Activated T-helper 1 cell treated with anti-CD3 and anti-CD28 coated beads, Interleukin-12 subunit alpha, Interleukin-12 subunit beta, Interleukin-2, Interleukin-4 antibody, amounts not matched to agents 30 ng/mL and 10 ng/mL and 1 ng/mL, durations not matched to agents 14 hours and 24 hours and 36 hours (primary cell): ENCODE measurements at regions of chr14 and their contacts with region 1.

Region 1: GRCh38 chr14:34461334-34462131 is 507 bp downstream of the SPTSSA start:
- DNase-seq: no peak
- H3K4me3 Mint-ChIP-seq: peak overlapping the region; percentile 90
- H3K27ac Mint-ChIP-seq: peak overlapping the region; percentile 91
- H3K4me1 Mint-ChIP-seq: peaks cover 28% of the 10 kb centered on the region
- H3K27me3 Mint-ChIP-seq: no peaks in the 10 kb centered on the region

Region 2: DNA sequence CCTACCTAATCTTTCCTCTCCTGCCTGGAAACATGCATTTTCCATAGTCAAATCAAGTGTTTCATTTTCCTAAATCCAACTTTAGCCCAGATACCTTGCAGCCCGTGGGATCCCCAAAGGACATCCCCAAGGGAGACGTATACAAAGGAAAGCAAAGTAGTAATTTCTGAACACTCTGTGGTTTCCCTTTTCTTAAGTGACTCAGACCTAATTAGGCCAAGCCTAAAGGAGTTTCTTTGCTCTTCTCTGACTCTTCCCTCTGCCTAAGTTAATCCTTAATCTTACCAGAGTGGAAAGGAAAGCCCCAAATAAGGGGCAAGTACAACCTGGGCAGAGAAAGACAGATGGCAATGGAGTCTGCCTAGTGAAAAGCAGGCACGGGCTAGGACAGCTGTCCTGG is 249.8 kb before region 1 on chr14:
- intact Hi-C with region 1: loop called (anchors 10 kb)
- DNase-seq: no peak
- H3K4me3 Mint-ChIP-seq: peak overlapping the region; percentile 22
- H3K27ac Mint-ChIP-seq: peak overlapping the region; percentile 47
- H3K4me1 Mint-ChIP-seq: peaks cover 22% of the 10 kb centered on the region
- H3K27me3 Mint-ChIP-seq: peaks cover 5% of the 10 kb centered on the region

Region 3: DNA sequence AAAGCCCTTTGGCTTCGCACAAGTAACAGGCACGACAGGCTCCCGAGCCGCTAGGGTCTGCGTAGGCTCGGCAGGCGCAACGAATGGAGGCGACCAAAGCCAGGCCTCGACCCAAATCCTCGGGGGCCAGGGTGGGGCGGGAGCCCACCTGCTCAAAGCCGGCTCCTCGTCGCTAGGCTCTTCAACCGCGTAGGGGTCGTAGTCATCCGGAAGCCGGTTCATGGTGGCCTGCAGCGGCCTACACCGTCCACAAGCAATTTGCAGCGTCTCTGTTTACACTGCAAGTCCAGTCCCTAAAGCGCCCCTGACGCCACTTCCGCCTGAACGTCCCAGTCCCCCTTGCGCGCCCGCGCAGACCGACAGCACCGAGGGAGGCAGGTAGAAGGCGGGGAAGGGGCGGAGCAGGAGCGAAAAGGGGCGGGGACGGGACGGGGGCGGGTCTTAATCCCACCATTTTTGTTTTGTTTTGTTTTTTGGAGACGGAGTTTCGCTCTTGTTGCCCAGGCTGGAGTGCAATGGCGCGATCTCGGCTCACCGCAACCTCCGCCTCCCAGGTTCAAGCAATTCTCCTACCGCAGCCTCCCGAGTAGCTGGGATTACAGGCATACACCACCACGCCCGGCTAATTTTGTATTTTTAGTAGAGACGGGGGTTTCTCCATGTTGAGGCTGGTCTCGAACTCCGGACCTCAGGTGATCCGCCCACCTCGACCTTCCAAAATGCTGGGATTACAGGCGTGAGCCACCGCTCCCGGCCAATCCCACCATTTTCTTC is 78.1 kb after region 1 on chr14 and contains the start of gene EAPP:
- intact Hi-C with region 1: loop called (anchors 5 kb)
- DNase-seq: peak; percentile 93
- H3K4me3 Mint-ChIP-seq: peak within 1 kb of the TSS; percentile 98
- H3K27ac Mint-ChIP-seq: peak within 1 kb of the TSS; percentile 93
- H3K4me1 Mint-ChIP-seq: peaks cover 18% of the 10 kb centered on the region
- H3K27me3 Mint-ChIP-seq: no peaks in the 10 kb centered on the region
- total RNA-seq, gene EAPP: 34.4 and 35.1 TPM in 2 replicates

Region 4: DNA sequence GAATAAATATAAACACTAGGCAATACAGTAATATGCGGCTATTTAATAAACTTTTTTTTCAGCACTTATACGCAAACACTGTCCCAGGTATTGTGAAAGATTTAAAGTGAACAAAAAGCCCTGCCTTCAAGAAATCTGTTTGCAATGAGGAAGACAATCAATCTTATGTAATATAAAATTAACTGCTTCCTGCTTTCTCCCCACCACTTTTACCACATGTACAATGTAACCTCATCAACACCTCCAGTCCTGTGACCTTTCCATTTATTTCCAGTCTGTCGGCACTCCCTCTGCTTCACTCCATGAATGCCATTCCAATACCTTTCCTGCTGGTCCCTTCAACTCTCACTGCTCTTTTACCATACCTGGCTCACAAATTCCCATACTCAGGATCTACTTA is 157.9 kb after region 1 on chr14:
- intact Hi-C with region 1: loop called (anchors 5 kb)
- DNase-seq: no peak
- H3K4me3 Mint-ChIP-seq: no peak overlapping the region
- H3K27ac Mint-ChIP-seq: no peak overlapping the region
- H3K4me1 Mint-ChIP-seq: peaks cover 40% of the 10 kb centered on the region
- H3K27me3 Mint-ChIP-seq: no peaks in the 10 kb centered on the region

Region 5: GRCh38 chr14:34629657-34630529 is 168.4 kb after region 1 on chr14 and contains the start of gene SNX6:
- intact Hi-C with region 1: loop called (anchors 5 kb)
- DNase-seq: peak; percentile 76
- H3K4me3 Mint-ChIP-seq: peak within 1 kb of the TSS; percentile 95
- H3K27ac Mint-ChIP-seq: peak within 1 kb of the TSS; percentile 99
- H3K4me1 Mint-ChIP-seq: peaks cover 8% of the 10 kb centered on the region
- H3K27me3 Mint-ChIP-seq: peaks cover 11% of the 10 kb centered on the region
- total RNA-seq, gene SNX6: 70.3 and 75.6 TPM in 2 replicates

Region 6: DNA sequence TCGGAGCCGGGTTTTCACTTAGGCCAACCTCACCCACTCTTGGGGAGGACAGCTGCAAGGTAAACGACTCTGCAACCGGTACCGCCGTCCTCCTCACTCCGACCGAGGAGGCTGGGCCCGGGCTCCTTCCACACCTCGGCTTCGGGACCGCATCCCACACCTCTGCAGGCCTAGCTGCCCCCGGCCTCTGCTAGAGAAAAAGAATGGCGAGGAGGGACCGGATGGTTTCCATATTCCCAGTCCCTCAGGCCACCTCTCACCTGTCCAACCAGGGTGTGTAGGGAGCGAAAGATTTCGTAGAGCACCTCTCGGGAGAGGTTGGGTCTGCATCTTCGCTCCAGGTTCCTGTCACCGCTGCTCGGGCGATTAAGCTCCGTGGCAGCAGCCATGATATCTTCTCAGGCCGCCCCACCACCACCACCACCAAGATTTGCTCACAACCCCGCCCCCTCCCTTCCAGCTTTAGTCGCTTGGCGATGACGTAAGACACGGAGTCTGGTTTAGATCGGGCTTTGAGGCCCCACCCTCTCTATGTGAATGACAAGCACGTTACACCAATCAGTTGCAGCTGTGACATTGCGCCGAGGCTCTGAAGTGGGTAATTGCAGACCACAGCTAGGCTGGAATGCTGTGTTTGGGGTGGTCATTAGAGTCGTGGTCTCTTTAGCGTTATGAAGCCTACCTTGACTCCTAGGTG is 1858.8 kb after region 1 on chr14 and contains the start of gene MBIP:
- intact Hi-C with region 1: loop called (anchors 2 kb)
- DNase-seq: peak; percentile 83
- H3K4me3 Mint-ChIP-seq: peak within 1 kb of the TSS; percentile 93
- H3K27ac Mint-ChIP-seq: peak within 1 kb of the TSS; percentile 92
- H3K4me1 Mint-ChIP-seq: peaks cover 41% of the 10 kb centered on the region
- H3K27me3 Mint-ChIP-seq: peaks cover 14% of the 10 kb centered on the region
- total RNA-seq, gene MBIP: 29.4 and 33.4 TPM in 2 replicates